GM10248 (cell line): ENCODE measurements at regions of chr7 and their contacts with region 1.

Region 1: GRCh38 chr7:123797673-123798527 is 47.1 kb upstream of the HYAL4 start:
- DNase-seq: peak; percentile 17
- CTCF ChIP-seq: peak; percentile 38

Region 2: DNA sequence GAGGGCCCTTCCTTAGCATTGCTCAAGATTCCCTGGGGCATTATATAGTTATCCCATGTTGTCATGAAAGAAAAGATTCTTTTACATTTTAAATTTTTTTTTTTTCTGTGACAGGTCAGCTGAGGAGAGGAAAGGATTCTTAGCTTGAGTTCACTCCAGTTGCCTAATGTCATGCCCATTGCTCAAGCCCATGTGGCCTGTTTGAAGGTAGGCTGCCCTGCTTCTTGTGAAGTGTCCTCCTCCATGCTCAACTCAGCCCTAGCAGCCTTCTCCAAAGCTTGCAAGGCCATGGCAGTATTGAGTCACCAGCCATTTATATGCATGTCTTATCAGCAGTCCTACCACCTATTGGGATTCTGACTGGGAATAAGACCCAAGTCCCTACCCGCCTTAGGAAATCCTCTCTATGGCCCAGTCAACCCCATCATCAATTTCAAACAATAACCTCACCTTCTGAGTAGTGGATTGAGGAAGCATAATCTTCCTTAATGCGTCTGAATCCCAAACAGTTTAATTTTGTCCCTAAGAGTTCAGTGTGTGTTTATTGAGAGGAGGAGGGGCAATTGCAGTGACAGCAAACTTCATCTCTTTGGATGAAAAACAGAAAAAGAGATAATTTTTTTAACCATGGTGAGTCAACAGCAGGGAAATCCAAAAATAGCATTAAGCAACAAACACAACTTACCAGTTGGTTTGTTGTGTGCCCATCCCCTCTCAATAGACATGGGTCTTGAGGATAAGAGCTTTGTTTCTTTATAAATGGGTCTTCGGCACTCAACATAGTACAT is 10.5 kb before region 1 on chr7:
- CTCF ChIA-PET with region 1: interaction called, 21 read pairs
- POLR2A ChIA-PET with region 1: no interaction called
- DNase-seq: no peak
- CTCF ChIP-seq: no peak

Region 3: GRCh38 chr7:123816916-123817315 is 19.0 kb after region 1 on chr7:
- CTCF ChIA-PET with region 1: interaction called, 10 read pairs
- POLR2A ChIA-PET with region 1: no interaction called
- DNase-seq: no peak
- CTCF ChIP-seq: no peak

Region 4: DNA sequence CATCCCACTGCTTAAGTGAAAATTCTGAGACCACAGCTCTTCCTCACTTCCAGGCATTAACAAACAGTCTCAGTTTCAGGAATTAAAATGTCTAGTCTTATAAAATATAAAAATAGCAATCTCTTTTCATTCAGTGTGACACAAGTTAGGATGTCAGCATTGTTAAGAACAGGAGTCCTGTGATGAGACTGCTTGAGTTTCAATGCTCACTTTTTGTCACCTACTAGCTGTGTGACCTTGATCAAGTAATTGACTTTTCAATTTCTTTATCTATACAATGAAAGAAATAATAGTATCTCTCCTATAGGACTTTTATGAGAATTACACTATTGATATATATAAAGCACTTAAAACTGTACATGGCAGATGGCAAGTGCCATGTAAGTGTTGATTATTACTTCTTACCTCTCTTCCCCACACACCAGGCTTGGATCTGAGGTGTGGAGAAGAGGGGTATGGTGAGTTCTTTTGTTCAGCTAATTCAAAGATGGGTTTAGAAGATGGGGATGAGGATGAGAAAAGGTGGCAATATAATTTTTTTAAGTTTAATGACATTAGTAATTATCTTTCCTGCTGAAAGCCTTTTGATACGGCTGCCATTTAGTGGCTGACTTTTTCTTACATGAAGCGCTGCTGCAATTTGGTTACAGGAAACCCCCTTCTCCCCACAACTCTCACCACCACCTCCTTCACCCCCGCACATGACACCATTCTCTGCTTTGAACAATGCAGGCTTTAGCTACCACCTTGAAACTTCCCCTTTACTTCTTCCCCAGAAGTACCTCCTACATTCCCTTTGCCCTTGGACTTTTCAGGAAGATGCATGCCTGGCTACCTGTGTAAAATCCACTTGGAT is 26.2 kb after region 1 on chr7:
- CTCF ChIA-PET with region 1: interaction called, 25 read pairs
- POLR2A ChIA-PET with region 1: no interaction called
- DNase-seq: peak; percentile 42
- CTCF ChIP-seq: no peak

Region 5: DNA sequence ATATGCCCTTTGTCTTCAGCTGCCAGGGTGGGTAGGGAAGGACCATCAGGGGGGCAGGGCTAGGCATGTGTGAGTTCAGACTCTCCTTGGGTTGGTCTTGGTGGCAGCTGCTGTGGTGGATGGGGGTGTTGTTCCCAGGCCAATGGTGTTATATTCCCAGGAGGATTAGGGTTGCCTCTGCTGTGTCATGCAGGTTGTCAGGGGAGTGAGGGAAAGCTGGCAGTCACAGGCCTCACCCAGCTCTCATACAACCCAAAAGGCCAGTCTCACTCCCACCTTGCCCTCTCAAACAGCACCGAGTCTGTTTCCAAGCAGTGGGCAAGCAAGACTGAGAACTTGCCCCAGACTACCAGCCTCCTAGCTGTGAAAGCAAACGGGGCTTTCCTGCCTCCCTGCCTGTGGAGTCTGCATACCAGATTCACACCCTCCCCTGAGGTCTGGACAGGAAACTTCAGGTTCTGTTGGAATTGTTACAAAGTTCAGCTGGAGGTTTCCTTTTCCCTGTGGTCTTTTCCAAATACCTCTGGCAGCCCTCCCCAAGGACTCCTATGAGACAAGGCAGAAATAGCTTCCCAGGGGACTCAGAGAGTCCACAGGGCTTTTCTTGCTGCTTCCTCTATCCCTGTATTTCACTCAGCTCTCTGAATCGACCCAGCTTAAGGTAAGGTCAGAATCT is 48.5 kb after region 1 on chr7:
- CTCF ChIA-PET with region 1: interaction called, 30 read pairs
- POLR2A ChIA-PET with region 1: no interaction called
- DNase-seq: no peak
- CTCF ChIP-seq: no peak

Region 6: GRCh38 chr7:124179641-124180040 is 381.7 kb after region 1 on chr7:
- CTCF ChIA-PET with region 1: no interaction called
- POLR2A ChIA-PET with region 1: no interaction called
- DNase-seq: no peak
- CTCF ChIP-seq: no peak